ENCODE measurements at regions of chr6 and their contacts with region 1.

Region 1: GRCh38 chr6:51855310-51856082 is 231.9 kb downstream of the PKHD1 start:
- DNase-seq: peak; percentile 30
- H3K4me3 ChIP-seq: no peak overlapping the region
- H3K27ac ChIP-seq: no peak overlapping the region
- H3K4me1 ChIP-seq: no peaks in the 10 kb centered on the region
- H3K27me3 ChIP-seq: no peaks in the 10 kb centered on the region
- CTCF ChIP-seq: peak; percentile 61

Region 2: DNA sequence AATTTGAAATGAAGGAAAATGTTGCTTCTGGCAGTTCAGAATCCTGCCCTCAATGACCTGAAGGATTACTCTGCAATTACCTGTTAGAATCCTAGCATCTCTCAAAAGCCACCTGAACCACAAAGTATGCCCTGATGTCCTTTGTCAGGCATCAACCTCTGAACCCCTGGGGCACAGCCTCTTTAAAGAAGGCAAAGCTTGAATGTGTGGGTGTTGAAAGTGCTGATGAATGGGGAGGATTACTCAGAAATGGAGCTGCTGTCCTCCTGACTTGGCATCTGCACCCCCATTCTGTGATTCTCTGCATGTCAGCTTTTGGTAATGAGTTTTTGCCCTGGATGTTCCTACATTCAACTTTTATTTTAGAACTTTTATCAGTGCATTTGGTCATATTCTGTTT is 52.7 kb after region 1 on chr6:
- intact Hi-C with region 1: no loop called
- DNase-seq: no peak
- H3K4me3 ChIP-seq: no peak overlapping the region
- H3K27ac ChIP-seq: no peak overlapping the region
- H3K4me1 ChIP-seq: no peaks in the 10 kb centered on the region
- H3K27me3 ChIP-seq: no peaks in the 10 kb centered on the region
- CTCF ChIP-seq: no peak

Region 3: DNA sequence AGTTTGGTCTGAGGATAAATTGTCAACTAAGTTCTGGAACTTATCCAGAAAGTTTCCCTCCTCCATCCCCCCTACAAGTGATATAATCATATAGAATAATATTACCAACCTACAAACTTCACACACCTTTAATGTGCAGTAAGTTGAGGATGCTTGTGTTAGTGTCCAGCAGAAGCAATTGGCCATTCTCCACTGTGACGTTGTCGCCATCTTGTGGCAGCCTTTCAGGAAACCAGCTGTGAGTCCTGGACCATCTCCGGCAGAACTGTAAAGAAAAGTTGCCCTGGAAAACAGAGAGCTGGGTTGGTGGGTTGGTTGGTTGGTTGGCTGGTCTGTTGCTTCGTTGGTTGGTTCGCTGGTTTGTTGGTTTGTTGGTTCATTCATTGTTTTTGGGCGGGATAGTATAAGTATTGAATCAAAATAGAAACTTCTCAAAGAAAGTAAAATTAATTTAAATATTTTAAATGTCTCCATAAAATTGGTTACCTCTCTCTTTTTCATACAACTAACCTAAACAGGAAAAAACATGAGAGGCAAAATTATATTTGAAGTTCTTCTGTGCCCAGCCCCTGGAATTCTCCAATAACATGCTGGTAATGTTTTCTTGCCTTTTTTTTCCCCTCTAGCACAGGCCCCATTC is 104.4 kb after region 1 on chr6:
- intact Hi-C with region 1: loop called (anchors 10 kb)
- DNase-seq: peak; percentile 70
- H3K4me3 ChIP-seq: no peak overlapping the region
- H3K27ac ChIP-seq: no peak overlapping the region
- H3K4me1 ChIP-seq: no peaks in the 10 kb centered on the region
- H3K27me3 ChIP-seq: no peaks in the 10 kb centered on the region
- CTCF ChIP-seq: peak; percentile 54

Region 4: GRCh38 chr6:52020945-52021570 is 165.6 kb after region 1 on chr6:
- intact Hi-C with region 1: loop called (anchors 10 kb)
- DNase-seq: no peak
- H3K4me3 ChIP-seq: no peak overlapping the region
- H3K27ac ChIP-seq: no peak overlapping the region
- H3K4me1 ChIP-seq: no peaks in the 10 kb centered on the region
- H3K27me3 ChIP-seq: no peaks in the 10 kb centered on the region
- CTCF ChIP-seq: peak; percentile 82

Measured in colonic mucosa (tissue), 4 donors.